Left colon (tissue), 2 donors: ENCODE measurements at regions of chr13 and their contacts with region 1.

Region 1: DNA sequence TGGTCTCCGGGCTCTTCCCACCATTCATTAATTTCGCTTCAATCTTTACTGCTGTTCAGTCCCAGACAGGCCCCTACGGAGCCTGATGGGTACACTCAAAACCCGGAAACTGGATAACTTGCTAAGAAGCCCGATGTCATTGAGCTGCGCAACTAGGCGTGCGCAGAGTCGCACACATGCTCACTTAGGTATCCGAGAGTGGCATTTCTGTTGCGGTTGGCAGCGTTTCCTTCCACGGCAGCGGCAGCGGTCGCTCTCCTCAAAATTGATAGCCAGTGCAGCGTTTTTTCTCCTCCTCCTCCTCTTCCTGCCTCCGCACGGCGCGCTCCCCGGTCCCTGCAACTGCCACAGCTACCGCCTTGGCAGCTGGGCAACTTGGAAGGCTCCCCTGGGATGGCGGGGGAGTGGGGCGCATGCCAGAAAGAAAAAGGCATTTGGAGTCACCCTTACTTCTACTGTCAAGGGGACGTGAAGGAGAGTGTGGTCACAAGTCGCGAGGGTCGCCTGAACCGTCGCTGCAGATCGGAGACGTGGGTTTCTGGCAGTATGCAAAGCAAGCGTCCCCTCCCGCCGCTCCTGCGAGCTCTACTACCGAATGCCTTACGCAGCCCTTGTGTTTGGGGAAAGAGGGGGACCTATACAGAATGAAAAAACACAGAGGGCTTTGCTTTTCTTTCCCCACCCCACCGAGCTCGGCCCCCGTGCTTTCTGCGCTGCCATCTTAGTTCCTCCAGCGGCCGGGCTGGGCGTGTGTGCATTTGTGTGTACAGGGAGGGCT is 2.4 kb upstream of the MYCBP2 start:
- DNase-seq: peak; percentile 85 to 86
- ATAC-seq: peak; percentile 67

Region 2: GRCh38 chr13:76991796-76992547 is 337.4 kb before region 1 on chr13 and contains the start of gene CLN5:
- intact Hi-C with region 1: loop called in 1 of 2 experiments (anchors 10 kb)
- DNase-seq: peak; percentile 96
- ATAC-seq: peak; percentile 97
- total RNA-seq, gene CLN5: 18.1 to 30.4 TPM

Region 3: GRCh38 chr13:77172650-77173049 is 156.7 kb before region 1 on chr13:
- intact Hi-C with region 1: no loop called
- DNase-seq: no peak
- ATAC-seq: no peak